Breast epithelium (tissue), 4 donors: ENCODE measurements at regions of chr7 and their contacts with region 1.

Region 1: GRCh38 chr7:143408686-143409561 is at the start of gene EPHA1:
- DNase-seq: peak in 1 of 2 donors; percentile 75
- H3K4me3 ChIP-seq: peak within 1 kb of the TSS in 2 of 3 donors; percentile 72 to 73
- H3K27ac ChIP-seq: peak within 1 kb of the TSS; percentile 12 to 60
- H3K4me1 ChIP-seq: peaks cover 0 to 10% of the 10 kb centered on the region in 2 donors
- H3K27me3 ChIP-seq: no peaks in the 10 kb centered on the region
- CTCF ChIP-seq: peak; percentile 36 to 63 (median 45)
- POLR2A ChIP-seq: no peak
- total RNA-seq, gene EPHA1: 11.8 to 15.4 TPM in 2 of 3 donors, not detected in the other

Region 2: DNA sequence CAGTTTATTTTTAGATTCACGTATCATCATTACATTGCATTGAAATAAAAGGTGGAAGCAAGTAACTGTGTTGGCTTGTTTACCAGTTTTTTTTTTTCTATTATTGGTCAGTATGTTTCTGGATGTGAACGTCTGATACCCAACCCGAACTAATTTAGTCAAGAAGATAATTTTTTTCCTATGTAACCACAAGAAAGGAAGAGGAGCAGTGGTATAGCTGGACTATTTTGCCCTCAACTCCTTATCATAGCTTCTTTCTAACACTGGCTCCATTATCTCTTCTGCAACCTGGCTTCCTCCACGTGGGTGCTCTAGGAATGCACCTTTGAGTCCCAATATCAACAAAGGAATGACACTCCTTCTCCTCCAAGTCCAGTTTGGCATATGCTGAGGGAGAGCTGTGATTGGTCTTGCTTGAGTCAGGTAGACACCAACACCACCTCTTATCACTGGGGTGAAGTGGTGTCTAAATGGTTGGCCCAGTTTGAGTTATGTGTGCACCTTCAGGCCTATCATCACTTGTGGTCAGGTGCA is 411.4 kb before region 1 on chr7:
- intact Hi-C with region 1: loop called (anchors 5 kb)
- DNase-seq: no peak
- H3K4me3 ChIP-seq: no peak overlapping the region
- H3K27ac ChIP-seq: no peak overlapping the region
- H3K4me1 ChIP-seq: no peaks in the 10 kb centered on the region
- H3K27me3 ChIP-seq: no peaks in the 10 kb centered on the region
- CTCF ChIP-seq: no peak
- POLR2A ChIP-seq: no peak

Region 3: DNA sequence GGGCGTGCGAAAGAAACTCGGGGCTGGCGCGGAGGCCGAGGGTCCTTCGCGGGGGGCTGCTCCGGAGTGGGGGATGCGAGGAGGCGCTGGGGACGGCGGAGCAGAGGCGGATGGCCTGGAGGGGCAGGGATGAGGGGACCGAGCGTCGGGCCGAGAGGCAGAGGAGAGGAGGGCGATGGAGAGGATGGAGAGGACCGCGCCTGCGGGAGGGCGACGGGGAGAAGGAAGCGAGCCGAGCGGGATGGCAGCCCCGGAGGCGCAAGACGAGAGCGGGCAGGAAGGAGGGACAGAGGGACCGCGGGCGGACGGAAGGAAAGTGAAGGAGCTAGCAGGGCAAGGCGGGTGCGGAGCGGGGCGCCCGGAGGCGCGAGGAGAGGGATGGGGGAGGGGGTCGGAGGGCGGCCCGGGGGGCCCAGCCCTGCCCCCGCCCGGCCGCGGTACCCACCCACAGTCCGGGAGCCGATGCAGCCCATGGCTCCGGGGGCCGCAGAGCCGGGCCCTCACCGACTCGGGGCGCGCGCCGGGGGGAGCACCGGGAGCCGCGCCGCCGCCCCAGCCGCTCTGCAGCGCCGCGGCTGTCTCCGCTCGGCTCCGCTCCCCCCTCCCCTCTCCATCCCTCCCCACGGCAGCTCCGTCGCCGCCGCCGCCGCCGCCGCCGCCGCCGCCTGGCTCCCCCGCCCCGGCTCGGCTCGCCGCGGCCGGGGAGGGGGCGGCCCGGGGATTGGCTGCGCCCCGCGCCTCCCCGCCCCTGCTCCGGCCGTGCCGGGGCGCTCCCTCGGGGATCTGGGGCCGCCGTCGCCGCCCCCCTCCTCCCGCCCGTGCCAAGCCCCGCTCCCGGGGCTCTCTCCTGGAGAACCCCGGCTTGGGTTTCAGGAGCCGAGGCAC is 46.6 kb before region 1 on chr7 and contains the start of gene FAM131B:
- intact Hi-C with region 1: no loop called
- DNase-seq: no peak
- H3K4me3 ChIP-seq: peak within 1 kb of the TSS; percentile 54 to 91 (median 63)
- H3K27ac ChIP-seq: no peak within 1 kb of the TSS
- H3K4me1 ChIP-seq: no peaks in the 10 kb centered on the region
- H3K27me3 ChIP-seq: peaks cover 0 to 18% of the 10 kb centered on the region in 2 donors
- CTCF ChIP-seq: no peak
- POLR2A ChIP-seq: no peak
- total RNA-seq, gene FAM131B: 0.48 to 2.3 (median 0.73) TPM